ENCODE measurements at regions of chr9 and their contacts with region 1.

Region 1: DNA sequence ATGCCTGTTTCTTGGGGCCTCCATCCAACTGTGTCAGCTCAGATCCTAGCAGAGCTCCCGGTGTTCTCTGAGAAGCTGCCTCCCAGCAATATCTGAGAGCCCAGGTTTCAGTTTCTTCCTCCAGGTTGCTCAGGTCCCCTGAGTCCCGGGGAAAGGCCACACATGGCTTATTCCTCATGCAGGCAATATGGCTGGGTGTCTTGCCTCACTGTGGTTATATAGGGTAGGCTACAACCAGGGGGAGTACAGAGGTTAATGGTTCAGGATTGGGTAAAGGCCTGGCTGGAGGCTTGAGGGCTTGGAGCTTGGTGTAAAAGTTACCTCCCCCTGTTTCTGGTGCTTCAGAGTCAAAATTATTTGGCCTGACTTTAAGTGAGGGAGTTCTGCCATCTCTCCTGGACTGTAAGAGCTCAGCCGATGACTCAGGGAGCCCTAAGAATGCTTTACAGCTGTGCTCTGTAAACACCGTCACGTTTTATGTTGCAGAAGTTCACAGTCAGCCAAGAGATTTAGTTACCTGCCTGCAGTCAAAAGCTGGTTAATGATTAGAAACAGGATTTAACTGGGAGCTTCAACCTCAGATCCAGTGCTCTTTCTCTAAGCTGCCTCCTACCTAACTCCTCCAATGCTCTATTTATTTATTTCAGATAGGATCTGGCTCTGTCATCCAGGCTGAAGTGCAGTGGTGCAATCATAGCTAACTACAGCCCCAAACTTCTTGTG is 24.3 kb upstream of the UBAP2 start:
- H3K4me3 ChIP-seq: no peak overlapping the region
- H3K27ac ChIP-seq: peak overlapping the region; percentile 54
- H3K4me1 ChIP-seq: 0 out of 2 replicates have a peak, but pooled peaks cover 2% of the 10 kb centered on the region
- CTCF ChIP-seq: no peak

Region 2: GRCh38 chr9:33843312-33843961 is 229.6 kb before region 1 on chr9:
- CTCF ChIA-PET with region 1: no interaction called
- POLR2A ChIA-PET with region 1: no interaction called
- H3K4me3 ChIP-seq: no peak overlapping the region
- H3K27ac ChIP-seq: no peak overlapping the region
- H3K4me1 ChIP-seq: 0 out of 2 replicates have a peak, but pooled peaks cover 6% of the 10 kb centered on the region
- CTCF ChIP-seq: no peak

Region 3: GRCh38 chr9:33924978-33925797 is 147.8 kb before region 1 on chr9:
- CTCF ChIA-PET with region 1: interaction called, 25 read pairs
- POLR2A ChIA-PET with region 1: no interaction called
- H3K4me3 ChIP-seq: no peak overlapping the region
- H3K27ac ChIP-seq: no peak overlapping the region
- H3K4me1 ChIP-seq: no peaks in the 10 kb centered on the region
- CTCF ChIP-seq: no peak

Region 4: GRCh38 chr9:34010979-34011378 is 62.0 kb before region 1 on chr9:
- CTCF ChIA-PET with region 1: interaction called, 47 read pairs
- POLR2A ChIA-PET with region 1: no interaction called
- H3K4me3 ChIP-seq: no peak overlapping the region
- H3K27ac ChIP-seq: no peak overlapping the region
- H3K4me1 ChIP-seq: no peaks in the 10 kb centered on the region
- CTCF ChIP-seq: no peak

Region 5: GRCh38 chr9:34025062-34025461 is 48.0 kb before region 1 on chr9:
- CTCF ChIA-PET with region 1: interaction called, 11 read pairs
- POLR2A ChIA-PET with region 1: no interaction called
- H3K4me3 ChIP-seq: no peak overlapping the region
- H3K27ac ChIP-seq: no peak overlapping the region
- H3K4me1 ChIP-seq: no peaks in the 10 kb centered on the region
- CTCF ChIP-seq: no peak

Region 6: GRCh38 chr9:34059281-34059680 is 13.7 kb before region 1 on chr9:
- CTCF ChIA-PET with region 1: interaction called, 15 read pairs
- POLR2A ChIA-PET with region 1: no interaction called
- H3K4me3 ChIP-seq: no peak overlapping the region
- H3K27ac ChIP-seq: no peak overlapping the region
- H3K4me1 ChIP-seq: no peaks in the 10 kb centered on the region
- CTCF ChIP-seq: no peak

Region 7: DNA sequence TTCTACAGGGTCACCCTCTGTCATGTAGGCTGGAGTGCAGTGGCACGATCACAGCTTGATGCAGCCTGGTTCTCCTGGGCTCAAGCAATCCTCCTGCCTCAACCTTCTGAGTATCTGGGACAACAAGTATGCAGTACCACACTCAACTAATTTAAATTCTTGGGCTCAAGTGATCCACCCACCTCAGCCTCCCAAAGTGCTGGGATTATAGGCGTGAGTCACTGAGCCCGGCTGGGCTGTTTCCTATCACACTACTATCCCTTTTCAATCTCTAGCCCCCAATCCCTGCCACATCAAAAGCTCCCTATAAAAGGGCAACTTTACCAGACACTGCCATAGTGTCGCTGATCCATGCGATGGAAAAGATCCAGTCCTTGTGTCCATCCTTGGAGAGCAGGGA is 33.1 kb after region 1 on chr9:
- CTCF ChIA-PET with region 1: interaction called, 14 read pairs
- POLR2A ChIA-PET with region 1: no interaction called
- H3K4me3 ChIP-seq: no peak overlapping the region
- H3K27ac ChIP-seq: no peak overlapping the region
- H3K4me1 ChIP-seq: no peaks in the 10 kb centered on the region
- CTCF ChIP-seq: no peak

Region 8: DNA sequence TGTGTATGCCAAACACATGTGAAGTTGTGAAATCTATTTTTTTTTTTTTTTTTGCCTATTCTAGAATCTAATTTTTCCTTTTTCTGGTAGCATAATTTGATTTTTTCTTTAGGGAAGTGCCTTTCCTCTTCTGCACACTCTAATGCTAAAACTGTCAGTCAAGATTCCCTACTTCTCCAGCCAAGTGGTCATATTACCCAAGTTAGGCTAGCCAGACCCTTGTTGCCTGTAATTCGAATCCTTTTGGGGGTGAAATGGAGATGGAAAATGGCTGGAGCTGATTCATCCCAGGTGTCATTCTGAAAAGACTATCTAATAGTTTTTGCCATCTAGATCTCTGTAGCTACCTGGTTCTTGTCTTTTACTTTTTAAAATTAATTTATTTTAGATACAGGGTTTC is 81.0 kb after region 1 on chr9:
- CTCF ChIA-PET with region 1: no interaction called
- POLR2A ChIA-PET with region 1: no interaction called
- H3K4me3 ChIP-seq: no peak overlapping the region
- H3K27ac ChIP-seq: no peak overlapping the region
- H3K4me1 ChIP-seq: no peaks in the 10 kb centered on the region
- CTCF ChIP-seq: no peak

Region 9: GRCh38 chr9:34252670-34253459 is 179.8 kb after region 1 on chr9:
- CTCF ChIA-PET with region 1: interaction called, 28 read pairs
- POLR2A ChIA-PET with region 1: no interaction called
- H3K4me3 ChIP-seq: no peak overlapping the region
- H3K27ac ChIP-seq: no peak overlapping the region
- H3K4me1 ChIP-seq: no peaks in the 10 kb centered on the region
- CTCF ChIP-seq: no peak; the same call in 1 of the 2 replicates

Measured in HEK293 (cell line).